GM18951 (cell line): ENCODE measurements at regions of chr3 and their contacts with region 1.

Region 1: DNA sequence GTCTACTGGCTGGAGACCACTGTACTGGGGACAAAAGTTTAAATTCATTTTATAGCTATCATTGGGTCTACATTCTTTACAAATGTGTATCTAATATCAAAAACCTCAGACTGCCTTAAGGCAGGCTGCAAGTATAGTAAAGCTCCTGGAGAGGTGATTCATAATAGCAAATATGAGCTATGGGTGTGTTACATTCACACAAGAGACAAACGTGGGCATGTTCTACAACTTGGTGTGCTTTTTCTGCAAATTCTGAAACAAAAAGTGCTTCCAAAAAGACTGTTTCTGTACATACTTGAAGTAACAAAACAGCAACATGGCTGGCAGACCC is 1101.4 kb downstream of the ROBO1 start:
- POLR2A ChIP-seq: no peak

Region 2: GRCh38 chr3:78376984-78377383 is 289.5 kb before region 1 on chr3:
- in situ Hi-C with region 1: no loop called
- POLR2A ChIP-seq: no peak

Region 3: GRCh38 chr3:79027593-79027992 is 361.2 kb after region 1 on chr3:
- in situ Hi-C with region 1: loop called (anchors 10 kb)
- POLR2A ChIP-seq: no peak